Activated naive CD4-positive, alpha-beta T cell treated with anti-CD3 and anti-CD28 coated beads for 36 hours (primary cell): ENCODE measurements at regions of chr14 and their contacts with region 1.

Region 1: GRCh38 chr14:72948481-72949138 is 22.3 kb downstream of the DCAF4 start:
- DNase-seq: peak; percentile 82
- H3K4me3 Mint-ChIP-seq: no peak overlapping the region
- H3K27ac Mint-ChIP-seq: no peak overlapping the region
- H3K4me1 Mint-ChIP-seq: no peaks in the 10 kb centered on the region
- H3K27me3 Mint-ChIP-seq: no peaks in the 10 kb centered on the region

Region 2: GRCh38 chr14:72812292-72812911 is 136.2 kb before region 1 on chr14:
- CTCF ChIA-PET with region 1: no interaction called
- intact Hi-C with region 1: no loop called
- DNase-seq: no peak
- H3K4me3 Mint-ChIP-seq: no peak overlapping the region
- H3K27ac Mint-ChIP-seq: no peak overlapping the region
- H3K4me1 Mint-ChIP-seq: peaks cover 29% of the 10 kb centered on the region
- H3K27me3 Mint-ChIP-seq: no peaks in the 10 kb centered on the region

Region 3: GRCh38 chr14:72904840-72905561 is 43.6 kb before region 1 on chr14:
- CTCF ChIA-PET with region 1: interaction called, 5 read pairs
- intact Hi-C with region 1: loop called (anchors 5 kb)
- DNase-seq: peak; percentile 76
- H3K4me3 Mint-ChIP-seq: no peak overlapping the region
- H3K27ac Mint-ChIP-seq: no peak overlapping the region
- H3K4me1 Mint-ChIP-seq: no peaks in the 10 kb centered on the region
- H3K27me3 Mint-ChIP-seq: peaks cover 10% of the 10 kb centered on the region

Region 4: DNA sequence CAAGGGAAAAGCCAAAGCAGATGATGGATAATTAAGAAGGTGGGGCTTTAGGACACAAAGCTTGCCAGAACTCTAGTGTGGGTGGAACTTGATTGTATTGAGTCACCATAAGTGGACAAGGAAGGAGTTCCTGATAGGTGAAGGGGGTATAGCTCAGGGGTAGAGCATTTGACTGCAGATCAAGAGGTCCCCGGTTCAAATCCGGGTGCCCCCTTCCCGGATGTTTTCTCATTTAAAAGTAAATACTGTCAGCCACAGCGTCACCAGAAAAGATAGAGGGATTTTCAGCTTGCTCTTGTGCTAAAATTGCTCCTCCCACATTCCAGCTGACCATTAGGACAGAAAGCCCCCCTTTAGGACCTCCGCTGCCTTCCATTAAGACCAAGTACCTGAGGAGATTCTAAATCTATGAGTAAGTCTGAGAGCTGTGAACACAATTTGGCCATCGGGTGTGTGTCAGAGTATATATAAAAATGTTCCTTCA is 14.3 kb after region 1 on chr14:
- CTCF ChIA-PET with region 1: interaction called, 11 read pairs
- intact Hi-C with region 1: no loop called
- DNase-seq: no peak
- H3K4me3 Mint-ChIP-seq: no peak overlapping the region
- H3K27ac Mint-ChIP-seq: no peak overlapping the region
- H3K4me1 Mint-ChIP-seq: no peaks in the 10 kb centered on the region
- H3K27me3 Mint-ChIP-seq: no peaks in the 10 kb centered on the region